ENCODE measurements at regions of chr4 and their contacts with region 1.

Region 1: GRCh38 chr4:70993181-70994068 is at the start of gene DCK:
- DNase-seq: peak; percentile 88 to 95 (median 90)
- H3K4me3 ChIP-seq: peak within 1 kb of the TSS; percentile 83
- H3K27ac ChIP-seq: peak within 1 kb of the TSS; percentile 13 to 79
- H3K4me1 ChIP-seq: peaks cover 4% of the 10 kb centered on the region
- H3K27me3 ChIP-seq: no peaks in the 10 kb centered on the region
- CTCF ChIP-seq: no peak
- EP300 ChIP-seq: no peak
- POLR2A ChIP-seq: peak; percentile 67
- total RNA-seq, gene DCK: 5.5 to 12.2 (median 10.0) TPM

Region 2: GRCh38 chr4:70839589-70840093 is 153.8 kb before region 1 on chr4 and contains the start of gene GRSF1:
- intact Hi-C with region 1: loop called in 3 of 4 experiments (anchors 5 to 10 kb)
- DNase-seq: peak; percentile 92 to 95 (median 94)
- H3K4me3 ChIP-seq: peak within 1 kb of the TSS; percentile 97
- H3K27ac ChIP-seq: peak within 1 kb of the TSS; percentile 89 to 95
- H3K4me1 ChIP-seq: peaks cover 5% of the 10 kb centered on the region
- H3K27me3 ChIP-seq: no peaks in the 10 kb centered on the region
- CTCF ChIP-seq: no peak
- EP300 ChIP-seq: no peak
- POLR2A ChIP-seq: peak; percentile 59
- total RNA-seq, gene GRSF1: 28.4 to 48.3 (median 44.3) TPM

Region 3: DNA sequence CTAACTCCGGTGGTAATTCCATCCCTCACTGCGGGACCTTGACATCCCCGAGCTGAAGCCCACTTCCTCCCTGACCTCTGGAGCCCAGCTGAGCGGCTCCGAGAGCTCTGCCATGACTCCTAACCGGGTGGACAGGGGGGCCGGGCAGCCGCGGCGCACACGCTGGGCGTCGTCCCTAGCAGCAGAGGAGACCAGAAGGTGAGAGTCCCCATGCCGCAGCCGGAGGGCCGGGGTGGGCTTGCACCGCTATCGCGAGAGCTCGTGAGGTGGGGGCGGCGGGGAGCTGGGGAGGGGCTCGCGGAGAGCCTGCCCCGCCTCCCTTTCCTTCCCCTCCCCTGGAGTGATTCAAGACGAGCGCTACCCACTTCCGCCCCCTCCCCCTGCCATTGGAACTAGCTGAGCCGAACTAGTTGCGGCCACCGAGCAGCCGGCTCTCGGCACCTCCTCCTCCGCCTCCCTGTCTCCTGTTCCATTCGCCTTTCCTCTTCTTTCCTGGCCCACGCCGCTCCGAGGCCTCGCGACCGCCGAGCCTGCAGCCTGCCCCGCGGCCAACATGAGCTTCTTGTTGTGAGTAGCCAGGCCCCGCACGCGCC is 91.3 kb before region 1 on chr4 and contains the start of gene MOB1B:
- intact Hi-C with region 1: loop called in 1 of 4 experiments (anchors 10 kb)
- DNase-seq: peak; percentile 82 to 88 (median 86)
- H3K4me3 ChIP-seq: peak within 1 kb of the TSS; percentile 98
- H3K27ac ChIP-seq: peak within 1 kb of the TSS; percentile 77 to 89
- H3K4me1 ChIP-seq: peaks cover 5% of the 10 kb centered on the region
- H3K27me3 ChIP-seq: no peaks in the 10 kb centered on the region
- CTCF ChIP-seq: peak in 1 of 3 donors; percentile 43
- EP300 ChIP-seq: no peak
- POLR2A ChIP-seq: peak; percentile 34
- total RNA-seq, gene MOB1B: 13.9 to 25.7 (median 21.9) TPM

Measured in ovary (tissue), 10 donors.